ENCODE measurements at regions of chr7 and their contacts with region 1.

Region 1: DNA sequence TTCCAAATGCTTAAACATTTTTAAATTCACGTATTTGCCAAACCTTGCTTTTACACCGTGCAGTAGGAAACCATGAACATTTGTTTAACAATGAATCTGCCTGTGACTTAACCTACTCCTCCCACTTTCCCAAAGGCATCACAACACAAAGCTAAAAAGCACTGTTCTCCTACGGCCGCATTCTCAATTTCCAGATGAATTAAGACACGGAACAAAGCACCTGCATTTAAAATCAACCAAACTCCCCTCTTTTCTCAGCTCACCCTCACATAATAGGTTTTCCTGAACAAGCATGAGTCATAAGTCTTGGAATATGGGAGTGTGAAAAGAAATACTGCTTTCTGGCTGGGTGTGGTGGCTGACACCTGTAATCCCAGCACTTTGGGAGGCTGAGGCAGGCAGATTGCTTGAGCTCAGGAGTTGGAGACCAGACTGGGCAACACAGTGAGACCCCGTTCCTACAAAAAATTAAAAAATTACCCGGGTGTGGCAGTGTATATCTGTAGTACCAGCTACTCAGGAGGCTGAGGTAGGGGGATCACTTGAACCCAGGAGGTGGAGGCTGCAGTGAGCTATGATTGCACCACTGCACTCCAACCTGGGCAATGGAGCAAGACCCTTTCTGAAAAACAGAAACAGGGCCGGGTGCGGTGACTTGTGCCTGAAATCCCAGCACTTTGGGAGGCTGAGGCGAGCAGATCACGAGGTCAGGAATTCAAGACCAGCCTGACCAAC is 51.7 kb upstream of the CYTH3 start:
- DNase-seq: no peak
- H3K4me3 ChIP-seq: no peak overlapping the region
- H3K27ac ChIP-seq: no peak overlapping the region
- H3K4me1 ChIP-seq: peaks cover 0 to 5% (median 2%) of the 10 kb centered on the region in 4 donors
- H3K27me3 ChIP-seq: no peaks in the 10 kb centered on the region
- CTCF ChIP-seq: no peak
- EP300 ChIP-seq: no peak
- POLR2A ChIP-seq: no peak

Region 2: DNA sequence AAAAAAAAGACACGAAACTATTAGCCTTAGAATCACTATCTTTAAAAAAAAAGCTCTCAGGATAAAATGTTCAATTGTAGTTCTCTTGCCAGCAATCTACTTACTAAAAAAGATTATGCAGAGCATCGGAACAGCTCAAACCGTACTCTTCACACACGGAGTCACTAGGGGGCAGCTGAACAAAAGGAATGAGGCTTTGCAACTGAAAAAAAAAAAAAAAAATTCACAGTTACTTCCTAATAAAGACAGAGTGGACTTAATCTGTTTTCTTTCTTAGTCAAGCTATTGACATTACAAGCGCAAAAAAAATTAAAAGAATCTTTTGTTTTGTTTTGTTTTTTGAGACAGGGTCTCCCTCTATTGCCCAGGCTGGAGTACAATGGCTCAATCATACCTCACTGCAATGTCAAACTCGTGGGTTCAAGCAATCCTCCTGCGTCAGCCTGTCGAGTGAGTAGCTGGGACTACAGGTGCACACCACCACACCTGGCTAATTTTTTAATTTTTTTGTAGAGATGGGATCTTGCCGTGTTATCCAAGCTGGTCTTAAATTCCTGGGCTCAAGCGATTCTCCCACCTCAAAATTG is 326.8 kb before region 1 on chr7:
- intact Hi-C with region 1: loop called (anchors 10 kb)
- DNase-seq: no peak
- H3K4me3 ChIP-seq: no peak overlapping the region
- H3K27ac ChIP-seq: peak overlapping the region in 3 of 4 donors; percentile 7 to 39 (median 16)
- H3K4me1 ChIP-seq: peaks cover 0 to 8% (median 2%) of the 10 kb centered on the region in 4 donors
- H3K27me3 ChIP-seq: no peaks in the 10 kb centered on the region
- CTCF ChIP-seq: peak; percentile 50 to 66 (median 63)
- EP300 ChIP-seq: no peak
- POLR2A ChIP-seq: no peak

Region 3: GRCh38 chr7:6160191-6160623 is 163.9 kb before region 1 on chr7:
- intact Hi-C with region 1: loop called (anchors 1 kb)
- DNase-seq: no peak
- H3K4me3 ChIP-seq: peak overlapping the region in 1 of 4 donors; percentile 0
- H3K27ac ChIP-seq: peak overlapping the region; percentile 35 to 71 (median 66)
- H3K4me1 ChIP-seq: peaks cover 23 to 37% (median 32%) of the 10 kb centered on the region in 4 donors
- H3K27me3 ChIP-seq: no peaks in the 10 kb centered on the region
- CTCF ChIP-seq: peak; percentile 83 to 88 (median 86)
- EP300 ChIP-seq: no peak
- POLR2A ChIP-seq: no peak